IMR-90 (cell line): ENCODE measurements at regions of chr11 and their contacts with region 1.

Region 1: DNA sequence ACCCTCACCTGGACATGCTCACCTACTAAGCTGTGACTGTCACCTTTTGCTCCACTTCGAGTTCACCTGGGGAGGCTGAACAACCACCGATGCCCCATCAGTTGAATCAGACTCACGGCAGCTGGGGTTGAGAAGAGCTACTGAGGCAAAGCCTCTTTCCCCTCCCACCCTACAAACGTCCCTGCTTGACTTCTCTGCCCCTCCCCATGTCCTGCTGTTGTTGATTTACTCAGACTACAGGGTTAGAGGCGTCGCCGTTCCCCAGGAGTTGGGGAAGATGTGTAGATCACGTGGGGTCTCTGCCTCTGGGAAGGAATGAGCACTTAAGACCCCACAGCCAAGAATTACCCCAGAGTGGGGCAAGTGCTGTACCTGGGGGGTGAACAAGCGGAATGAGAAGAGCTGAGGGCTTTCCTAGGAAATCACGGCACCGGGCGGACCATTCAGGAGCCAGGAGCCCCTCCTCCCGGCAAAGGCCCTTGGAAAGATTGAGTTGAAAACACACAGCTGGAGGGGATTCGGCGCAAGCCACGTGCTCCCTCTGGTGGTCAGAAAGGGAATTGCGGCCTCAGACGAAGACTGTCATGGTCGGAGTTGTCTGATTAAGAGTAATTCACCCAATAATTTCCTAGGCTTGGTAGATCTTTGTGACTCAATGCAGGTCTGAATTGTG is 7.0 kb downstream of the FXYD2 start:
- DNase-seq: peak; percentile 65
- ATAC-seq: peak; percentile 81
- H3K4me3 ChIP-seq: no peak overlapping the region
- H3K27ac ChIP-seq: no peak overlapping the region
- H3K4me1 ChIP-seq: peaks cover 2% of the 10 kb centered on the region; the same call in 1 of the 2 replicates
- H3K27me3 ChIP-seq: no peaks in the 10 kb centered on the region; the same call in 1 of the 2 replicates
- CTCF ChIP-seq: peak; percentile 95
- POLR2A ChIP-seq: no peak
- RAD21 ChIP-seq: peak; percentile 73

Region 2: DNA sequence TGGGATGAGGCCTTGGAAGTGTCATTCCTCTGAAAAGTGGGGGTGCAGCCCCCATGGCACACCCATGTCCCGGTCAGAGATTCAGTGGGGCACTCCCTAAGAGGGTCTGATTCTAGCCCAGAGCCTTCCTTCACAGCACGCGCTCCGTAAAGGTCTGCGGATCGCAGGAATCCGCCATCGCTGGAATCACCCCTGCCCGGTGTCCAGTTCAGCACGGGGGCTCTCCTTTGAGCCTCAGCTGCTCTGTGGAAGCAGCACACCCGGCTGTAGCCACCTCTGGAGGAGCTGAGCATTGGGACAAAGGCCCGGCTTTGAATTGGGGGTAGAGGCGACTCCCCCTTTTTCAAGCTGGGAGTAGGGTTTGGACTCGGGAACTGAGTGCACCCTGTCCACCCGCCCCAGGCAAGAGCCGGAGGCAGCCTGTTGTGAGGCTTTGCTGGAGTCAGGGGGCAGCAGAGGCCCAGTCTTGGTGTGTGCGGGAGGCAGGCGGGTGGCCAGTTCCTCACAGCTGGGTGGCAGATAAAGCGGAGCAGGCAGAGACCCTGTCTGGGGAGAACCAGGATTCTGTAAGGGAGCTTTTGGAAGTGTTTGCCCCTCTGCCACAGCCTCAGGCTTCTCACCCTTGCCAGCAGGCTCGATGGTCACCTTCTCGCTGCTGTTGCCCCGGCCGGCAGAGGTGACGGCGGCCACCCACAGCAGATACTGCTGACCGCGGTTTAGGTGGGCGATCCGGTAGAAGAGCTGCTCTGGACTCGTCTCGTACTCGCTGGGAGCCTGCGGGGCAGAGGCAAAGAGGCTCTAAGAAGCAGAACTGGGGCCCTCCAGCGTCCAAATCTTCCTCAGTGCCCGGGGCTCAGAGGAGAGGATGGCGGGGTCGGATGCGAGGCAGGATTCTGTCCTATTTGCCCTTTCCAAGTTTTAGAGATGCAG is 374.0 kb before region 1 on chr11:
- CTCF ChIA-PET with region 1: no interaction called
- POLR2A ChIA-PET with region 1: no interaction called
- dilution Hi-C with region 1: no loop called
- in situ Hi-C with region 1: no loop called
- intact Hi-C with region 1: loop called (anchors 1 kb)
- DNase-seq: peak; percentile 30
- ATAC-seq: peak; percentile 86
- H3K4me3 ChIP-seq: no peak overlapping the region
- H3K27ac ChIP-seq: no peak overlapping the region
- H3K4me1 ChIP-seq: no peaks in the 10 kb centered on the region
- H3K27me3 ChIP-seq: peaks cover 48% of the 10 kb centered on the region
- CTCF ChIP-seq: peak; percentile 60
- POLR2A ChIP-seq: no peak
- RAD21 ChIP-seq: peak; percentile 64

Region 3: DNA sequence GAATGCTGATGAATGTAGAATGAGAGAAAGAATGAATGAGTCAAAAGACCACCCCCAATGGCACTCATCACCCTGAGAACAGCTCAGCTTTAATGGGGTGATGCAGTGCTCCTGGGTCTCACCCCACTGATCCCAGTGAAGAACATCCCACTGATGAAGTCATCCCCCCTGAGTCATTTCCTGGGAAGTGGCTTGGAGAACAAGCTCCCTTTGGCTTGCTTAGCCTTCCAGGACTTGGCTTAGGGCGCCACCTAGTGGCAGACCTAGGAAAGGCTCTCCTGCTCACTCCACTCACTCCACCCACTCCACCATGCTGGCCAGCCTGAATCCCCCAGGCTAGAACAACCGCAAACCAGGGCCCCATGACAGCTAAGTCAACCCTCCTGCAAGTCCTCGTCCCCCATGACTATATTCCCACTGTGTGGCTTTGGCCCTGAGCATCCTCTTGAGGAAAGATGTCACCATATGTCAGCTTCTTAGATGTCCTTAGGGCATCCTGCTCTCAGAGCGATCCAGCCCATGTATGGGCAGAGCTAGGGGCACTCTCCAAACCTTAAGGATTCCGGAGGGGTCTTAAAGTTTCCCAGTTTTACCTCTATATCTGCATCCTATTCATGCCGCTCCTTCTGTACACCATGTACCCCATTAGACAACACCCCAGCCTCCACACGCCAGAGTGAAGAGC is 129.5 kb after region 1 on chr11:
- CTCF ChIA-PET with region 1: interaction called, 14 read pairs
- POLR2A ChIA-PET with region 1: no interaction called
- dilution Hi-C with region 1: no loop called
- in situ Hi-C with region 1: no loop called
- intact Hi-C with region 1: loop called (anchors 1 kb)
- DNase-seq: peak; percentile 91
- ATAC-seq: peak; percentile 97
- H3K4me3 ChIP-seq: no peak overlapping the region
- H3K27ac ChIP-seq: no peak overlapping the region
- H3K4me1 ChIP-seq: no peaks in the 10 kb centered on the region
- H3K27me3 ChIP-seq: peaks cover 7% of the 10 kb centered on the region; the same call in 1 of the 2 replicates
- CTCF ChIP-seq: peak; percentile 98
- POLR2A ChIP-seq: peak; percentile 54; the same call in 1 of the 2 replicates
- RAD21 ChIP-seq: peak; percentile 99

Region 4: DNA sequence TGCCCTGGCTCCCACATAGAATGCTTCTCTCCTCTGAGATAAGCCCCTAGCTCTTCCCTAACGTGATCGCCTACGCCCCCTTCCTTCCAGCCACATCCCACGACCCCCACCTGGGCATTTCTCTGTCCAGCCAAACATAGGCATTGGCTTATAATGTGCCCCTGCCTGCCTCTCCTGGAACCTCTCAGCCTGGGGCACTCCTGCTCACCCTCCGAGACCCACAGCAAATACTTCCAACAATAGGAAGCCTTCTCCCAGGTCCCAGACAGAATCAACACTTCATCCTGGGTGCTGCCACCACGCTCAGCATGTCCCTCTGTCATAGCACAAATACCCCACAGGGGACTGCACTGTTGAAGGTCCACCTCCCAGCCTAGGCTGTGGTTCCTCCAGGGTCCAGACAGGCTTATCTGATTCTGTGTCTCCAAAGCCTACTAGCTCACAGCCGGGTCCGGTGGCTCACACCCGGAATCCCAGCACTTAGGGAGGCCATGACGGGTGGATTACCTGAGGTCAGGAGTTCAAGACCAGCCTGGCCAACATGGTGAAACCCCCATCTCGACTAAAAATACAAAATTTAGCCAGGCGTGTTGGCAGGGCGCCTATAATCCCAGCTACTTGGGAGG is 235.2 kb after region 1 on chr11:
- CTCF ChIA-PET with region 1: interaction called, 5 read pairs
- POLR2A ChIA-PET with region 1: no interaction called
- dilution Hi-C with region 1: no loop called
- in situ Hi-C with region 1: no loop called
- intact Hi-C with region 1: loop called (anchors 1 kb)
- DNase-seq: no peak
- ATAC-seq: no peak
- H3K4me3 ChIP-seq: no peak overlapping the region
- H3K27ac ChIP-seq: no peak overlapping the region
- H3K4me1 ChIP-seq: no peaks in the 10 kb centered on the region
- H3K27me3 ChIP-seq: peaks cover 10% of the 10 kb centered on the region; the same call in 1 of the 2 replicates
- CTCF ChIP-seq: no peak
- POLR2A ChIP-seq: no peak
- RAD21 ChIP-seq: no peak